ENCODE measurements at regions of chr10 and their contacts with region 1.

Region 1: DNA sequence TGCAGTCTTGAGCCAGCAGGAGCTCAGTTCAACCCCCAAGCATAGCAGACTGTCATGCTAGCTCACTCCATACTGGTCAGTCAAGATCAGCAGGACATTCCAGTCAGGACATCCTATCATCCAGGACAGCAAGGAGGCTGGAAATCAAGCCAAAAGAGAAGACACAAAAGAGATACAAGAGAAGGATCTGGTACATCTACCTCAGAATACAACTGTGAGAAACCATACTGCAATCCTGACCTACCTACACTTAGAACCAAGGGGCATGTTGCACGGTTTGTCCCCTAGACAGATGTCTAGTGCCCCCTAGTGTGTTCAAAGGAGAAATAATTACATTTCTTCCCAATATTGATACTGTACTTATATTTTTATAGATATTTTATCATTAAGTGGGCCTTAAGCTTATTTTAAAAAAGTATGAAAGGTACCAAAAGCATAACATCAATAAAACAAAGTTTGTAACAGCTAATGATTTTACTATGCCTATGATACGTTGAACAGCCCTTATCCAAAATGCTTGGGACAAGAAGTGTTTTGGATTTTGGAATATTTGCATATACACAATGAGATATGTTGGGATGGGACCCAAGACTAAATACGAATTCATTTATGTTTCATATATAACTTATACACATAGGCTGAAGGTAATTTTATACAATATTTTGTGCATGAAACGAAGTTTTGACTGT is 26.7 kb downstream of the ERCC6 start:
- DNase-seq: no peak
- H3K4me3 ChIP-seq: no peak overlapping the region
- H3K27ac ChIP-seq: no peak overlapping the region
- H3K27me3 ChIP-seq: no peaks in the 10 kb centered on the region
- CTCF ChIP-seq: peak; percentile 75

Region 2: GRCh38 chr10:49478819-49479218 is 33.4 kb before region 1 on chr10:
- CTCF ChIA-PET with region 1: interaction called, 11 read pairs
- POLR2A ChIA-PET with region 1: no interaction called
- DNase-seq: no peak
- H3K4me3 ChIP-seq: no peak overlapping the region
- H3K27ac ChIP-seq: no peak overlapping the region
- H3K27me3 ChIP-seq: no peaks in the 10 kb centered on the region
- CTCF ChIP-seq: no peak

Region 3: GRCh38 chr10:49488056-49488717 is 24.1 kb before region 1 on chr10:
- CTCF ChIA-PET with region 1: interaction called, 24 read pairs
- POLR2A ChIA-PET with region 1: no interaction called
- DNase-seq: no peak
- H3K4me3 ChIP-seq: no peak overlapping the region
- H3K27ac ChIP-seq: no peak overlapping the region
- H3K27me3 ChIP-seq: no peaks in the 10 kb centered on the region
- CTCF ChIP-seq: no peak

Region 4: GRCh38 chr10:49500418-49500817 is 11.8 kb before region 1 on chr10:
- CTCF ChIA-PET with region 1: interaction called, 65 read pairs
- POLR2A ChIA-PET with region 1: no interaction called
- DNase-seq: no peak
- H3K4me3 ChIP-seq: no peak overlapping the region
- H3K27ac ChIP-seq: no peak overlapping the region
- H3K27me3 ChIP-seq: no peaks in the 10 kb centered on the region
- CTCF ChIP-seq: no peak

Region 5: GRCh38 chr10:49524496-49524895 is 12.2 kb after region 1 on chr10:
- CTCF ChIA-PET with region 1: interaction called, 29 read pairs
- POLR2A ChIA-PET with region 1: no interaction called
- DNase-seq: no peak
- H3K4me3 ChIP-seq: no peak overlapping the region
- H3K27ac ChIP-seq: no peak overlapping the region
- H3K27me3 ChIP-seq: no peaks in the 10 kb centered on the region
- CTCF ChIP-seq: no peak

Region 6: DNA sequence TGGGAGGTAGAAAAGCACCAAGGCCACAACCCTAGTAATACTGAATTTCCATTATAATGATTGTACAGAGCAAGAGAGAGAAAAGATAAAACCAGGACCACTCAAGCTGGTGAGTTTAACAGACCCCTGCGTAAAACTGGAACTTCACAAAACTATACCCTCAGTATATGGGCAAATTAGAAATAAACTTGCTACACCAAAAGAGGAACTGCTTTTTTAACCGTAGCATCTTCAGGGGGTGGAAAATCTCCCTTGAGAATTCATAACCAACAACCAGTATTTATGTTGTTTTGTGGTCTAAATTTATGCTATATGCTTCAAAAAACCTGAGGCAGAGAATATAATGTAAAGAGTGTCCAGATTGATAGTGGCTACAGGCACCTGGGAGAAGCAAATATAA is 940.3 kb after region 1 on chr10:
- CTCF ChIA-PET with region 1: no interaction called
- POLR2A ChIA-PET with region 1: no interaction called
- DNase-seq: no peak
- H3K4me3 ChIP-seq: no peak overlapping the region
- H3K27ac ChIP-seq: no peak overlapping the region
- H3K27me3 ChIP-seq: no peaks in the 10 kb centered on the region
- CTCF ChIP-seq: no peak